T-cell (primary cell): ENCODE measurements at regions of chr11 and their contacts with region 1.

Region 1: GRCh38 chr11:130861902-130862860 is 54.1 kb downstream of the SNX19 start:
- DNase-seq: peak; percentile 68 to 95 (median 84)
- ATAC-seq: peak; percentile 81 to 93 (median 84)
- H3K4me3 ChIP-seq: no peak overlapping the region
- H3K4me3 Mint-ChIP-seq: no peak overlapping the region
- H3K27ac ChIP-seq: no peak overlapping the region
- H3K27ac Mint-ChIP-seq: no peak overlapping the region
- H3K4me1 ChIP-seq: peaks cover 0 to 7% of the 10 kb centered on the region in 2 experiments
- H3K4me1 Mint-ChIP-seq: peaks cover 5 to 14% (median 6%) of the 10 kb centered on the region in 3 donors
- H3K27me3 ChIP-seq: peaks cover 0 to 3% of the 10 kb centered on the region in 2 experiments
- H3K27me3 Mint-ChIP-seq: peaks cover 4 to 7% of the 10 kb centered on the region in 2 donors

Region 2: GRCh38 chr11:130213143-130213978 is 648.8 kb before region 1 on chr11:
- CTCF ChIA-PET with region 1: interaction called, 7 to 13 read pairs
- POLR2A ChIA-PET with region 1: no interaction called
- DNase-seq: peak; percentile 17 to 82 (median 65)
- ATAC-seq: peak; percentile 87 to 93 (median 88)
- H3K4me3 ChIP-seq: no peak overlapping the region
- H3K4me3 Mint-ChIP-seq: no peak overlapping the region
- H3K27ac ChIP-seq: no peak overlapping the region
- H3K27ac Mint-ChIP-seq: no peak overlapping the region
- H3K4me1 ChIP-seq: peaks cover 0 to 8% of the 10 kb centered on the region in 2 experiments
- H3K4me1 Mint-ChIP-seq: peaks cover 0 to 4% (median 0%) of the 10 kb centered on the region in 3 donors
- H3K27me3 ChIP-seq: peaks cover 0 to 41% of the 10 kb centered on the region in 2 experiments
- H3K27me3 Mint-ChIP-seq: peaks cover 9 to 12% of the 10 kb centered on the region in 2 donors

Region 3: GRCh38 chr11:130431337-130432200 is 430.6 kb before region 1 on chr11:
- CTCF ChIA-PET with region 1: interaction called, 9 to 29 read pairs
- POLR2A ChIA-PET with region 1: no interaction called
- DNase-seq: peak; percentile 14 to 80 (median 55)
- ATAC-seq: peak in 3 of 4 experiments; percentile 28 to 64 (median 48)
- H3K4me3 ChIP-seq: no peak overlapping the region
- H3K4me3 Mint-ChIP-seq: no peak overlapping the region
- H3K27ac ChIP-seq: no peak overlapping the region
- H3K27ac Mint-ChIP-seq: no peak overlapping the region
- H3K4me1 ChIP-seq: peaks cover 0 to 3% of the 10 kb centered on the region in 2 experiments
- H3K4me1 Mint-ChIP-seq: peaks cover 6 to 15% (median 15%) of the 10 kb centered on the region in 3 donors
- H3K27me3 ChIP-seq: peaks cover 18 to 40% of the 10 kb centered on the region in 2 experiments
- H3K27me3 Mint-ChIP-seq: peaks cover 37% of the 10 kb centered on the region in 2 donors

Region 4: DNA sequence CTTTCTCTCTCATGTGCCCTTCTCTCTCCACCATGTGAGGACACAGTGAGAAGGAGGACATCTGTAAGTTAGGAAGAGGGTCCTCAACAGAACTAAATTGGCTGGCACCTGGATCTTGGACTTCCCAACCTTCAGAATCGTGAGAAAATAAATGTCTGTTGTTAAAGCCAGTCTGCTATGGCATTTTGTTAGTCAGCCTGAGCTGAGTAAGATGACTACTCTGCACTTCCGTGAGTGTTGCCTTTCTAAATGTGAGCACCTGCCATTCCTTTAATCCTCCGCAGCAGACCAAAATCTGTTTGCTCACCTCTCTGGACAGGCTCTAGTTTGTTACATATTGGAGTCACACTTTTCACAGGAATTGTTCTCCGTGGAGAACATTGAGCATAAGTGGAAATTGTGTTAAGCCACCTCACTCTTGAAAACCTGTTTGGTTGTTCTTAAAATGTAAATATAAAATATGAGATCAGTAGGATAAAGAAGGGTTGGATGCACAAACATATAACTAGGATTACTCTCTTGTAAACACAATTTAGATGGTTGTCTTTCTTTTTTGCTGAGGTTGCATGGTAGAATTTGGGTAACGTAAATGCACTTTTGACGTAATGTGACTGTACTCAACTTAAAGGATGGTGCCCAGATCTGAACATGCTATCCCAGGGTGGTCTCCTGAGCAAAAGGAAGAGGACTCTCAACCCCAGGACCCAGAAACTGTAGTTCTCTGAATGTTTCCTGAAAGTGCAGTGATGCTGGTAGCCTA is 11.8 kb before region 1 on chr11:
- CTCF ChIA-PET with region 1: interaction called in 1 of 2 experiments, 14 read pairs
- POLR2A ChIA-PET with region 1: no interaction called
- DNase-seq: no peak
- ATAC-seq: no peak
- H3K4me3 ChIP-seq: no peak overlapping the region
- H3K4me3 Mint-ChIP-seq: no peak overlapping the region
- H3K27ac ChIP-seq: no peak overlapping the region
- H3K27ac Mint-ChIP-seq: no peak overlapping the region
- H3K4me1 ChIP-seq: no peaks in the 10 kb centered on the region
- H3K4me1 Mint-ChIP-seq: no peaks in the 10 kb centered on the region
- H3K27me3 ChIP-seq: peaks cover 0 to 4% of the 10 kb centered on the region in 2 experiments
- H3K27me3 Mint-ChIP-seq: peaks cover 0 to 8% of the 10 kb centered on the region in 2 donors